Activated T-helper 1 cell treated with anti-CD3 and anti-CD28 coated beads, Interleukin-12 subunit alpha, Interleukin-12 subunit beta, Interleukin-2, Interleukin-4 antibody, amounts not matched to agents 30 ng/mL and 10 ng/mL and 1 ng/mL, durations not matched to agents 14 hours and 24 hours and 36 hours (primary cell): ENCODE measurements at regions of chr5 and their contacts with region 1.

Region 1: DNA sequence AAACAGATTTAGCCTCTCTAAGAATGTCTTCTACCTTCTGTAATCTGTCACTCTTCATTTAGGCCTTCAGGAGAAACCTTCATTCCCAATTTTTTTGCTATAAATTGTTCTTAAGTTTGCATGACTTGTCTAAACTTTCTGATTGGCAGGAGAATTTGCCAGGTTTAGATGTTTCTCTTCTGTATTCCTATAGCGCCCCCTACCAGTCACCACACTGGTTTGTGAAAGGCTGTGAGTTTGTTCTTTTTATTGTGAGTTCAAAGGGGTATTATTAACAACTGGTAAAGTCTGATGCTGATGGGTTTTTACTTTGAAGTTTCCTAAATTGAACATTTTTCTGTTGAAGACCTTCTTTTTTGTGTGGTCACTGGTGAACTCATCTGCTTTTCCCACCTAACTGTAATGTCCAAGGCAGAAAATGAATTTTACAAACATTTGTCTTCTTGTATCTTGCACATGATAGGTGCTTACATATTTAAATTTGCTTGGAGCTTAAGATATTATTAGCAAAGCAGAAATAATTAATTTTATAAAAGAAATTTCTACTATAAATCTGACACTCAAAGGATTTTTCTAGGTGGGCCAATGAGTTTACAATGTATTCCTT is 18.4 kb upstream of the F2RL2 start:
- DNase-seq: peak; percentile 41
- H3K4me3 Mint-ChIP-seq: no peak overlapping the region
- H3K27ac Mint-ChIP-seq: no peak overlapping the region
- H3K4me1 Mint-ChIP-seq: peaks cover 22% of the 10 kb centered on the region
- H3K27me3 Mint-ChIP-seq: no peaks in the 10 kb centered on the region

Region 2: DNA sequence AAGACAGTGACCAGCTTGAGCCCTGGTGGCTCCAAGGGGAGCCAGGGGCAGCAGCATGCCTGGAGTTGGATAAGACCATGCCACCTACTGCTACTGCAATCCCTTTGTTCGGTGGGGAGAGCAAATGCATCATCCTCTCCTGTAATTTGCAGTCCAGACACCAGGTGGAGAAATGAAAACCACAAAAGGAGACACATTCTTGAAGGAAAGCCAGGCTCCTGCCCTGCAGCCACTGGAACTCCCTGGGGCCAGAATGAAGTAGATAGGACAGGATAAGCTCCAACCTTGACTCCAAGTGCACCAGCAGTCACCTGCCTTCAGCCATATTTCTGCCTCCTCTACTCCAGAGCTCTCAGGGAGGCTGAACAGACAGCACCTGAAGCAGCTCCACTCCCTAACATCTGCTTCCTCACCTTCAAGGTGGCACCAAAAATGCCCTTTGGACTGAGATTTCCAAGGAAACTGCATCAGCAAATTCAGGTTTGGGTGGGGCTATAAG is 303.6 kb before region 1 on chr5:
- intact Hi-C with region 1: loop called (anchors 5 kb)
- DNase-seq: peak; percentile 36
- H3K4me3 Mint-ChIP-seq: no peak overlapping the region
- H3K27ac Mint-ChIP-seq: no peak overlapping the region
- H3K4me1 Mint-ChIP-seq: peaks cover 28% of the 10 kb centered on the region
- H3K27me3 Mint-ChIP-seq: no peaks in the 10 kb centered on the region

Region 3: DNA sequence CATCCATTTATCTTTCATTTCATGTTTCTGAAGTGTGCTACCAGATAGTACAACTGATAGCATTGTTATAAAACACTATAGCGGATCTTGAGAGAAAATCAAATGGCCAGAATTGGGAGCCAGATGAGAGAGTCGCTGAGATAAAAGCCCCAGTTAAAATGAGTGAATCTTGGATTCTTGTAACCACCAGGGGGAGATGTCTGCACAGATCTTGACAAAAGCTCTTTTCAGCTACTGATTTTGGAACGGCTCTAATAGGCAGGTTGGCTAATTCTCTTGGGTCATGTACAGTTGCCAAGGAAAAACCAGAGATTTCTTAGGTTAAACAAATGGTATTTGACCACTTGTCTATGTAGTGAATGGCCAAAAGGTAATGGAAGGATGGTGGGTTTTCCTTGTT is 40.1 kb before region 1 on chr5:
- intact Hi-C with region 1: loop called (anchors 1 kb)
- DNase-seq: no peak
- H3K4me3 Mint-ChIP-seq: no peak overlapping the region
- H3K27ac Mint-ChIP-seq: no peak overlapping the region
- H3K4me1 Mint-ChIP-seq: peaks cover 25% of the 10 kb centered on the region
- H3K27me3 Mint-ChIP-seq: no peaks in the 10 kb centered on the region

Region 4: DNA sequence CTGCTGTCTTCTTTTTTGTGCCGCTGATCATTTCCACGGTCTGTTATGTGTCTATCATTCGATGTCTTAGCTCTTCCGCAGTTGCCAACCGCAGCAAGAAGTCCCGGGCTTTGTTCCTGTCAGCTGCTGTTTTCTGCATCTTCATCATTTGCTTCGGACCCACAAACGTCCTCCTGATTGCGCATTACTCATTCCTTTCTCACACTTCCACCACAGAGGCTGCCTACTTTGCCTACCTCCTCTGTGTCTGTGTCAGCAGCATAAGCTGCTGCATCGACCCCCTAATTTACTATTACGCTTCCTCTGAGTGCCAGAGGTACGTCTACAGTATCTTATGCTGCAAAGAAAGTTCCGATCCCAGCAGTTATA is 91.4 kb after region 1 on chr5:
- intact Hi-C with region 1: no loop called
- DNase-seq: no peak
- H3K4me3 Mint-ChIP-seq: no peak overlapping the region
- H3K27ac Mint-ChIP-seq: peak overlapping the region; percentile 53
- H3K4me1 Mint-ChIP-seq: peaks cover 35% of the 10 kb centered on the region
- H3K27me3 Mint-ChIP-seq: no peaks in the 10 kb centered on the region

Region 5: GRCh38 chr5:76790632-76791290 is 149.1 kb after region 1 on chr5:
- intact Hi-C with region 1: no loop called
- DNase-seq: peak; percentile 14
- H3K4me3 Mint-ChIP-seq: no peak overlapping the region
- H3K27ac Mint-ChIP-seq: peak overlapping the region; percentile 68
- H3K4me1 Mint-ChIP-seq: peaks cover 26% of the 10 kb centered on the region
- H3K27me3 Mint-ChIP-seq: no peaks in the 10 kb centered on the region